SK-N-SH (cell line): ENCODE measurements at regions of chr11 and their contacts with region 1.

Region 1: DNA sequence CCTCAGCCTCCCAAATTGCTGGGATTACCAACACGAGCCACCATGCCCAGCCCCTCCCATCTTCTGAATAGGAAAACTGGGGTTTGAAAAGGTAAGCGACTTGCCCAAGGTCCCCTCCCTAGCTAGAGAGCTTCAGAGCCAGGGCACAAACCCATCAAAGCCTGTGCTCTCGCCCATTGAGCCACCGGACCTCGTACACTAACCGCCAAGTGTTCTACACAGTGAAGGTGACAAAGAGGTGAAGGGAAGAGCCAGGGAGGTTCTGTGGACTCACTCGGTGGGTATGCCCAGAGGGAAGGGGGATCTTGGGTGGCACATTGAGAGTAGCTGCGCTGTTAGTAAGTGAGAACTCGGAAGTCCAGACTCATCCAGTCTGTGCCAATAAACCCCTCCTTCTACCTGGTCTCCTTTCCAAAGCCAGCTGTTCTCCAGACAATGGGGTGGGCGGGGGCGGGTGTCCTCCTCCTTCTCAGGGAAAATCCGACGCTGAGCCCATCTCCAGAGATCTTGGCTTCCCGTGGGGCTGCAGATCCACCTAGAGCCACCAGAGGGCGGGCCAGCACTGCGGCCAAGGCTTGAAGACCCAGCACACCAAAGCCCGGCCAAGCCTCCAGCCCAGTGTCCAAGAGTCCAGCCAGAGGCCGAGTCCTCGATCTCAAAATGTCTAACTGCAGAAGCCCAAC is 3.2 kb upstream of the RTN4RL2 start:
- DNase-seq: peak; percentile 85
- H3K4me3 ChIP-seq: no peak overlapping the region; a peak in 1 of 4 replicates
- H3K27ac ChIP-seq: no peak overlapping the region
- H3K4me1 ChIP-seq: peaks cover 11 to 22% of the 10 kb centered on the region in 2 experiments; a peak in 2 of 4 replicates
- H3K27me3 ChIP-seq: peaks cover 33% of the 10 kb centered on the region
- CTCF ChIP-seq: peak; percentile 87
- EP300 ChIP-seq: no peak
- RAD21 ChIP-seq: peak; percentile 92

Region 2: DNA sequence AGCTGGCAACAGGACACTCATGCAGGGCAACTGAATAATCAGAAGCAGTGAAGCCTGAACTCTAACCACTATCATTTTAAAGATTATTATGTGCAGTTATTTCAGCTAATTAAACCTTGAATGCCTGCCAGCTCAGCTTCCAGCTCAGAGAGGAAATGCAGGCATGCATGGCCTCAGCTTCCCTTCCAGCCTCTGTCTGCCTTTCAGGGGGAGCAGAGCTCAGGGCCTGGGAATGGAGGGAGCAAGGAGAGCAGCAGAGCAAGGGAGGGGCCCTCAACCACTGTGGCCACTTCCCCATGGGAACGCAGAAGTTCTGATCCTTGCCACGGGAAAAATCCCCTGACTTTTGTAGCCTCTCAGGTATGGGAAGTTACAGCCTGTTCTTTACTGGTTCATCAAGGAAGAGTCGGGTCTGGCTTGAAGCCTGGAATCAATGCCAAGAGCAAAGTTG is 187.5 kb before region 1 on chr11:
- CTCF ChIA-PET with region 1: no interaction called
- POLR2A ChIA-PET with region 1: no interaction called
- DNase-seq: no peak
- H3K4me3 ChIP-seq: no peak overlapping the region
- H3K27ac ChIP-seq: no peak overlapping the region
- H3K4me1 ChIP-seq: peaks cover 0 to 11% of the 10 kb centered on the region in 2 experiments; a peak in 1 of 4 replicates
- H3K27me3 ChIP-seq: no peaks in the 10 kb centered on the region
- CTCF ChIP-seq: no peak
- EP300 ChIP-seq: no peak
- RAD21 ChIP-seq: no peak

Region 3: GRCh38 chr11:57426929-57427726 is 30.0 kb before region 1 on chr11 and contains the start of gene SLC43A3:
- CTCF ChIA-PET with region 1: interaction called, 26 read pairs
- POLR2A ChIA-PET with region 1: no interaction called
- DNase-seq: peak; percentile 80
- H3K4me3 ChIP-seq: peak within 1 kb of the TSS in 1 of 2 experiments; percentile 39; a peak in 2 of 4 replicates
- H3K27ac ChIP-seq: no peak within 1 kb of the TSS; a peak in 1 of 4 replicates
- H3K4me1 ChIP-seq: peaks cover 23 to 24% of the 10 kb centered on the region in 2 experiments; a peak in 2 of 4 replicates
- H3K27me3 ChIP-seq: no peaks in the 10 kb centered on the region; the same call in 1 of the 2 replicates
- CTCF ChIP-seq: no peak
- EP300 ChIP-seq: no peak
- RAD21 ChIP-seq: no peak
- polyA plus RNA-seq, gene SLC43A3: 4.1 and 4.7 TPM in 2 replicates

Region 4: GRCh38 chr11:57474017-57474802 is 17.1 kb after region 1 on chr11:
- CTCF ChIA-PET with region 1: interaction called, 306 read pairs
- POLR2A ChIA-PET with region 1: interaction called, 3 read pairs
- DNase-seq: peak; percentile 37
- H3K4me3 ChIP-seq: no peak overlapping the region
- H3K27ac ChIP-seq: no peak overlapping the region
- H3K4me1 ChIP-seq: peaks cover 0 to 8% of the 10 kb centered on the region in 2 experiments; a peak in 1 of 4 replicates
- H3K27me3 ChIP-seq: 0 out of 2 replicates have a peak, but pooled peaks cover 4% of the 10 kb centered on the region
- CTCF ChIP-seq: no peak
- EP300 ChIP-seq: no peak
- RAD21 ChIP-seq: no peak

Region 5: GRCh38 chr11:57493507-57494503 is 36.7 kb after region 1 on chr11:
- CTCF ChIA-PET with region 1: interaction called, 57 read pairs
- POLR2A ChIA-PET with region 1: no interaction called
- DNase-seq: peak; percentile 78
- H3K4me3 ChIP-seq: no peak overlapping the region; a peak in 1 of 4 replicates
- H3K27ac ChIP-seq: no peak overlapping the region
- H3K4me1 ChIP-seq: peaks cover 0 to 3% of the 10 kb centered on the region in 2 experiments; a peak in 1 of 4 replicates
- H3K27me3 ChIP-seq: no peaks in the 10 kb centered on the region
- CTCF ChIP-seq: peak; percentile 90
- EP300 ChIP-seq: no peak
- RAD21 ChIP-seq: peak; percentile 71

Region 6: GRCh38 chr11:57521116-57521515 is 64.0 kb after region 1 on chr11:
- CTCF ChIA-PET with region 1: interaction called, 174 read pairs
- POLR2A ChIA-PET with region 1: no interaction called
- DNase-seq: no peak
- H3K4me3 ChIP-seq: no peak overlapping the region
- H3K27ac ChIP-seq: no peak overlapping the region
- H3K4me1 ChIP-seq: no peaks in the 10 kb centered on the region
- H3K27me3 ChIP-seq: no peaks in the 10 kb centered on the region
- CTCF ChIP-seq: no peak
- EP300 ChIP-seq: no peak
- RAD21 ChIP-seq: no peak

Region 7: GRCh38 chr11:57644748-57645688 is 187.9 kb after region 1 on chr11:
- CTCF ChIA-PET with region 1: interaction called, 35 read pairs
- POLR2A ChIA-PET with region 1: no interaction called
- DNase-seq: peak; percentile 87
- H3K4me3 ChIP-seq: peak overlapping the region in 1 of 2 experiments; percentile 36; a peak in 1 of 4 replicates
- H3K27ac ChIP-seq: no peak overlapping the region
- H3K4me1 ChIP-seq: peaks cover 27 to 30% of the 10 kb centered on the region in 2 experiments; a peak in 3 of 4 replicates
- H3K27me3 ChIP-seq: no peaks in the 10 kb centered on the region
- CTCF ChIP-seq: peak; percentile 87
- EP300 ChIP-seq: no peak
- RAD21 ChIP-seq: peak; percentile 78

Region 8: DNA sequence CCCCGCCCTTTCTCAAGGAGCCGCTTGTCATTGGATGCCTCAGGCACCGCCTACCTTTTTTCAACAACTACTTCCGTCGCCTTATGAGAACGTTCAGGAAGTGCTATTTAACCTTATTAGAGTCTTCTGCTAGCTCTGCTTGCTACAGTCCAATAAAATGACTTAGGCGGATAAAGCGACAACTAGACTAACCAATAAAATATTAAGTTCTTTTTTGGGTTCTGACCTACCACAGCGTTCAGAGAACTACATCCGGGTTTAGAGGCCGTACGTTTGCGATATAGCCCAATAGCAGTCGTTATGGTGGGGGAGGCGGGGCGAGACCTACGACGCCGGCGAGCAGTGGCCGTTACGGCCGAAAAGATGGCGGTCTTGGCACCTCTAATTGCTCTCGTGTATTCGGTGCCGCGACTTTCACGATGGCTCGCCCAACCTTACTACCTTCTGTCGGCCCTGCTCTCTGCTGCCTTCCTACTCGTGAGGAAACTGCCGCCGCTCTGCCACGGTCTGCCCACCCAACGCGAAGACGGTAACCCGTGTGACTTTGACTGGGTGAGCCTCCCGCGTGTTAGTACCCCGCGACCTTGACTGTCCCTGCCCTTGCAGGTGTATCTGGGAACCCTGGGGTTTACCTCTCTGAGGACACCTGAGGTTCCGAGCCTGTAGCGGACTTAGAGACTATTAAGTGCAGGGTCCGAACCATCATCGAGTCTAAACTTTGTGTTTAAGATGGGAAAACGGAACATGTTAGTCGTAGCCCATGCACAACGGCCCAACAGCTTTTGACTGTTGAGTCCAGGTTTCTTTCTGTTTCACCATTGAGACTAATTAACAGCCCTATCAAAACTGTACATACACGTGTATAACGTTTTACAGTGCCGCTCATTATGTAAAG is 255.4 kb after region 1 on chr11 and contains the start of gene TMX2:
- CTCF ChIA-PET with region 1: no interaction called
- POLR2A ChIA-PET with region 1: no interaction called
- DNase-seq: peak; percentile 92
- H3K4me3 ChIP-seq: peak within 1 kb of the TSS; percentile 94 to 98
- H3K27ac ChIP-seq: peak within 1 kb of the TSS; percentile 90 to 94
- H3K4me1 ChIP-seq: peaks cover 14 to 20% of the 10 kb centered on the region in 2 experiments; a peak in 3 of 4 replicates
- H3K27me3 ChIP-seq: no peaks in the 10 kb centered on the region
- CTCF ChIP-seq: no peak
- EP300 ChIP-seq: no peak
- RAD21 ChIP-seq: no peak
- polyA plus RNA-seq, gene TMX2: 88.6 and 94.6 TPM in 2 replicates